ENCODE measurements at regions of chr17 and their contacts with region 1.

Region 1: DNA sequence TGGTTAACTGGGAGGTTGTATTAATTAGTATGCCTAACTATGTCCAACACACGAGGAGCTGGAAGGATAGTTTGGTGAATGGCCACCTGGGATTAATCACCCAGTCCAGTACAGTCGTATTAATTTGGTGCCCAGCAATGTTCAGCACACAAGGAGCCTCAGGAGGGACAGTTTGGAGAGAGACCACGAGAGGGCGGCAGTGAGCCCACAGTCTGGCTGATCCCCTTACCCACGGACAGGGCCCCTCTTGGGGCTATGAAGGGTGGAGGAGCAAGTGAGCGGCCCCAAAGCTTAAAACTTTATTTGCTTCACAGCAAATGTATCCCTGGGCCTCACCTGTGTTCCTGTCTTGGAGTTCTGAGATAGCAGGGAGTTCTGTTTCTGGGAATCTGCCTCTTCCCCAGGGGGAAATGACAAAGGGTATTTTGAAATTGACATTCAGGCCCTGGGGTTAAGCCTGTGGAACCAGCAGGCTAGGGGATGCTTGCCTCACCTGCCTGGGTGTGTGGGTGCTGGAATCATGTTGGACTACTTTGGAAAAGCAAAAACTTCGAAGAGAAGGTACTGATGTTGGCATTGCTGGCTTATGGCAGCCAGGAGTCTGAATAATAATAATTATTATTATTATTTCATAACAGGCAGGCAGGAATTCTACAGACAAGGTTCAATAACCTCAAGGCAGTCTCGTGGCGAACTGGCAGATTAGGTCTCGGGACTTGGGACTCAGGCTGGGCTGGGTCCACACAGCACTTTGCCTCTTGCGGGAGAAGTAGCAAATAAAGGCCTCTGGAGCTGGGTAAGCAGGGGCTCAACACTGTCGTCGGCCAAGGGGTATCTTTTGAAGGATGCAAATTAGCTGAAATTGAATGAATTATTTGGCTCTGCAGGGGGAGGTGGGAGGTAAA is 227.6 kb upstream of the ASIC2 start:
- DNase-seq: peak; percentile 14
- H3K4me3 Mint-ChIP-seq: no peak overlapping the region
- H3K27ac Mint-ChIP-seq: no peak overlapping the region
- H3K4me1 Mint-ChIP-seq: no peaks in the 10 kb centered on the region
- H3K27me3 Mint-ChIP-seq: peaks cover 1% of the 10 kb centered on the region

Region 2: GRCh38 chr17:33674685-33675084 is 154.0 kb after region 1 on chr17:
- intact Hi-C with region 1: loop called (anchors 5 kb)
- DNase-seq: peak; percentile 30
- H3K4me3 Mint-ChIP-seq: no peak overlapping the region
- H3K27ac Mint-ChIP-seq: no peak overlapping the region
- H3K4me1 Mint-ChIP-seq: peaks cover 1% of the 10 kb centered on the region
- H3K27me3 Mint-ChIP-seq: peaks cover 19% of the 10 kb centered on the region

Region 3: GRCh38 chr17:33750943-33751701 is 230.4 kb after region 1 on chr17:
- intact Hi-C with region 1: loop called (anchors 5 kb)
- DNase-seq: peak; percentile 52
- H3K4me3 Mint-ChIP-seq: peak overlapping the region; percentile 46
- H3K27ac Mint-ChIP-seq: no peak overlapping the region
- H3K4me1 Mint-ChIP-seq: peaks cover 6% of the 10 kb centered on the region
- H3K27me3 Mint-ChIP-seq: peaks cover 11% of the 10 kb centered on the region